Right cardiac atrium (tissue), 5 donors: ENCODE measurements at regions of chr11 and their contacts with region 1.

Region 1: GRCh38 chr11:69642913-69643632 is 2.1 kb downstream of the CCND1 start:
- DNase-seq: peak; percentile 83 to 93 (median 91)
- ATAC-seq: peak; percentile 69 to 72
- H3K4me3 ChIP-seq: peak overlapping the region; percentile 92
- H3K27ac ChIP-seq: peak overlapping the region; percentile 54
- H3K4me1 ChIP-seq: peaks cover 3% of the 10 kb centered on the region
- H3K27me3 ChIP-seq: no peaks in the 10 kb centered on the region

Region 2: DNA sequence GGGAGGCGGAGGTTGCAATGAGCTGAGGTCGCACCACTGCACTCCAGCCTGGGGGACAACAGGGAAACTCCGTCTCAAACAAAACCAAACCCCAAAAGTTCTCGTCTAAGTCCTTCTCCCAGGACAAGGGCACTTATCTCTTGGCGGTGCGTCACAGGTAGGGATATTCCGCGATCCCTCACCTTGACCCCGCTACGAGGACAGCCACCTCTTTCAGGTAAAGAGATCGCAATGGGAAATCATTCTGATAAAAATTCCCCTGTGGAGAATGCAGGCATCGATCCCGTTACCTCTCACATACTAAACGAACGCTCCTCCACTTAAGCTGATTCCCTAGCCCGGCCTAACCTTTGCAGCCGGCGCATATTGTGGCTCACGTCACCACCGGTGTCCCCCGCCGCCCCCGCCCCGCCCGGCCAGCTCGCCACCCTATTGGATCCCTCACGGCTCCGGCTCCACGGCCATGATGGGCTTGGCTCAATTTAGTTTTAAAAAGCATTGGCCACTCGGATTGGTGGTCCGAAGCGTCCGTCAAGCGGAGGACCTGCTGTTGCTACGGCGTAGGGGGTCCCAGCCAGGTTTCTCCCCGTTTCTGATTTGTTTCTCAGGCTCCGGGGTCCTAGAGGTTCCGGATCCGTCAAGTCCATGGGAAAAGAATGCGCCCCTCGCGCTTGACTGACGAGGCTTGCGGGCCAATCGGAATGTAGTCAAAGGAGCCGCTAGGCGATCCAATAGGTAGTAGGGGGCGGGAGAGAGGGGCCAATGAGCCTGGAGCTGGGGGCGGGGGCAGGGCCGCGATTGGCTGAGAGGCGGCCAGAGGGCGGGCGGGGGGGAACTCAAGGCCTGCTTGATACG is 1183.0 kb before region 1 on chr11:
- intact Hi-C with region 1: loop called in 1 of 4 experiments (anchors 10 kb)
- DNase-seq: peak; percentile 98 to 99 (median 98)
- ATAC-seq: peak; percentile 95 to 96
- H3K4me3 ChIP-seq: peak overlapping the region; percentile 97
- H3K27ac ChIP-seq: peak overlapping the region; percentile 98
- H3K4me1 ChIP-seq: peaks cover 12% of the 10 kb centered on the region
- H3K27me3 ChIP-seq: no peaks in the 10 kb centered on the region

Region 3: GRCh38 chr11:69101115-69101791 is 541.8 kb before region 1 on chr11:
- intact Hi-C with region 1: loop called (anchors 2 to 5 kb)
- DNase-seq: peak; percentile 83 to 89 (median 88)
- ATAC-seq: peak; percentile 83 to 85
- H3K4me3 ChIP-seq: no peak overlapping the region
- H3K27ac ChIP-seq: no peak overlapping the region
- H3K4me1 ChIP-seq: no peaks in the 10 kb centered on the region
- H3K27me3 ChIP-seq: no peaks in the 10 kb centered on the region

Region 4: DNA sequence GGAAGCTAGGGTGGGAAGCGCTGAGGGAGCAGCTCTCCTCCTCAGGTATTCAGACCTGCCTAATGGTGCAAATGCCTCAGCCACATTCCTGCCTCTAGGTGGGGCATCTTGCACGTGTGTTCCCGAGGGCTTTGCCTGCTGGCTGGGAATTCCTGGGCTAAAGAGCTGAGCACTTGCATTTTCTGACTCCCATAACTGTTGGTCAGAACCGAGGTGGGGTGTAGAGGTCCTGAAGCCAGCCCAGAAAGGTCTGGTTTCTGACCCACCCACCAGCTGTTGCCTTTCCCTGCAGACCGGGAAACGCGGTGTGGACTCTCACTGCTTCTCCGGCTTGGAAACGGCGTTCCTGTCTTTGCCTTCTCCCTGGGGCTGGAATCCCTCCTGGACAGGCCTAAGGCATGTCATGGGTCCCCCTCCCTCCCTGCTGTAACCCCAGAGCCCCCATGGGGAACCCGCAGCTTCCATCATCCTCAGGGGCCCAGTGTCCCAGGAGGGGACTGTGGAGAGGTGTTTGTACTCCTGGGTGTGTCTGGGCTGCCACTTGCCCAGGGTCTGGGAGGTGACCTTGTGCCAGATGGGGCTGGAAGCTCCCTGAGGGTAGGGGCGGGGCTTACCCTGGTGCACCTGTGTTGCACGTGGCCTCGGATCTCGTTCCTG is 511.3 kb before region 1 on chr11:
- intact Hi-C with region 1: loop called in 1 of 4 experiments (anchors 5 kb)
- DNase-seq: peak; percentile 68 to 86 (median 78)
- ATAC-seq: peak; percentile 73 to 82
- H3K4me3 ChIP-seq: no peak overlapping the region
- H3K27ac ChIP-seq: no peak overlapping the region
- H3K4me1 ChIP-seq: peaks cover under 1% of the 10 kb centered on the region
- H3K27me3 ChIP-seq: no peaks in the 10 kb centered on the region

Region 5: DNA sequence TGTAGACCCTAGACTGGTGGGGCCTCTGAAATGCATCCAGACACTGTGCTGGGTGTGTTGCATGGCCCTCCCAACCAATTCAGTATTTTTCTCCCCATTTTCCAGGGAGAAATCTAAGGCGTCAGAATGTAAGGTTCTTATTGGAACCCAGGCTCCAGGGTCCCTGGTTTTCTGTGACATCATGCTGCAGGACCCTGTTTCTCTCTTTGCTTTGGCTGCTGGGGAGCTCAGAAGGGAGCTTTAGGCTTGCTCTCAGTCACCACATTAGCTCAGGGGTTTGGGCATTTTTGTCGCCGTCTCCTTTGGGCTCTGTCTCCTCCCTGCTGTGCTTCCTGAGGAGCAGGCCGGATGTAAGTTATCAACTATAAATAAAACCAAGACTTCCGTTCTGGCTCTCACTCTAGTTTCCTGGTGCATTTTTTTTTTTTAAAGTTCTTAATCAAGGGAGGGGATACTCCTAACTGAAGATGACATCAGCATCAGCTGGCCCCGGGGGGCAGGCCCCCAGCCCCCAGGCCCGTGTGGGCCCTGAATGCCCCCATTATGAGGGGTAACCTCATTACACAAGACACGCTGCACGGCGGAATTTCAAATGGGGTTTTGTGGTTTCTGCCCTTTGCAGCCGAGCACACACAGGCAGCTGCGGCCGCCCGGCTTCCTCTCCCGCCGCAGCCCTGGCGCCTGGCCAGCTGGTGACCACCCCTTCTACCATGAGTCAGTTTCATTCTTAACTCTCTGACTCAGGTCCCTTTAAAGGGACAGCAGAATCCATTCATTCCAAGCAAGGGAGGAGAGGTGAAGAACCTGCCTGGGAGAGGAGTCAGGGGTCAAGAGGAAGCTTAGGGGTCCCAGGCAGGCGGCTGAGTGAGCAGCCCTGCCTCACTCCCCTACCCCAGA is 345.9 kb before region 1 on chr11:
- intact Hi-C with region 1: loop called in 3 of 4 experiments (anchors 5 to 10 kb)
- DNase-seq: peak; percentile 96 to 98 (median 97)
- ATAC-seq: peak; percentile 83 to 87
- H3K4me3 ChIP-seq: no peak overlapping the region
- H3K27ac ChIP-seq: peak overlapping the region; percentile 82
- H3K4me1 ChIP-seq: peaks cover 17% of the 10 kb centered on the region
- H3K27me3 ChIP-seq: no peaks in the 10 kb centered on the region

Region 6: DNA sequence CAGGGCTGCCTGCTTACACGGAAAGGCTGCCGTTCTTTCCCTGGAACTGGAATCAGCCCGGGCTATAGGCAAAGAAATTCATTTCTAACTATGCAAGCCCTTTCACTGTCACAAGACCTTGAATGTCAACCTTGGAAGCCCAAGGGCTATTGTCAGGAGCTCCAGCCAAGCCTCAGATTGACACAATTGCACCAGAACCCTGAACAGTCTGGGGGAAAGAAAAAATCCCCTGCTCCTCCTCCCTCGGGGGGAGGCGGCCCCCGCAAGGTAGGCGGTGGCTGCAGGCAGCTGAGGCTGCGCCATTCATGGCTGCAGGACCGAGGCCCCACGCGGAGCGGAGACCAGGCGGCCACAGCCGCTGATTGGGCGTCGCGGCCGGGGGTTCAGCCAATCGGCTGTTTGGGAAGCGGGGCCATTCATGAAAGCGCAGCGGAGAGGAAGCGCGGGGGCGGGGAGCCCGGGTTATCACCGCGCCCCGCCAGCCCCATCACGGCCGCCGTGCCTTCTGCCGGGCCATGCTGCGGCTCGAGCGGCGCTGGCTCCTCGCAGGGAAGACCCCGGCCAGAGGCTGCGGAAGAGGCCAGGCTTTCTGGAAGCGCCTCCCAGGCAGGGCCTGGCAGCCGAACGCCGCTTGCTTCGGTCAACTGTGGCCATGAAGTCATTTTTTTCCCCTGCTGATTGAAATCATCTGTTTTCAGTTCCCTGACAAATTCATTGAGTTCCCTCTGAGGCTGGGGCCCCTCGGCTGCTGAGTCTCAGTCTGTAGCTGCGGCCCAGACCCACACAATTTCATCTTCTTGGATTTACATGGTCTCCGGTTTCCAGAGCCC is 199.7 kb before region 1 on chr11:
- intact Hi-C with region 1: loop called in 2 of 4 experiments (anchors 10 kb)
- DNase-seq: peak; percentile 95 to 97 (median 97)
- ATAC-seq: peak; percentile 95
- H3K4me3 ChIP-seq: peak overlapping the region; percentile 42
- H3K27ac ChIP-seq: peak overlapping the region; percentile 84
- H3K4me1 ChIP-seq: peaks cover 4% of the 10 kb centered on the region
- H3K27me3 ChIP-seq: no peaks in the 10 kb centered on the region

Region 7: DNA sequence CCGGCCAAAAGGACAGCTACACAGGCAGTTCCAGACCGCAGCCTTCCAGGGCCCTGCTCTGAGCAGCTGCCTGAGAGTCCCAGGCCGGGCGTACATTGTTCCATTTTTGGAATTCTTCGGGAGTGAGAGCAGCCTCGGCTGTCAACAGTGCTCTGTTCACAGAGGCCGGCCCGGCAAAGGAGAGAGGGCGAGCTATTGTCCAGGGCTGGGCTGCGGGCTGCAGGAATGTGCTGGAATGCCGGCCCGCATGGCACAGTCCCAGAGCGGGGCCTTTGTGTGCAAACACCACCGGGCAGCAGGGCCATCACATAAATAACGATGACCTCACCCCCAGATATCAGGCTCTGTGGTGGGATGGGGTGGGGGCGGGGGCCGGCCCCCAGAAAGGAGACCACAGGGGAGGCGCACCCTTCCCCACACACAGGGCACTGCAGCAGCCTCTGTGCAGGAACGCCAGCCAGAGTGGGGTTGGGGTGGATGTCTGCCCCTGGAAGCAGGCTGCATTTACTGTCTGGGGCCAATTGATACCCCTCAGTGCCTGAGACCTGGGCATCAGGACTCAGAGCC is 145.8 kb before region 1 on chr11:
- intact Hi-C with region 1: loop called in 1 of 4 experiments (anchors 10 kb)
- DNase-seq: peak; percentile 89 to 95 (median 94)
- ATAC-seq: peak; percentile 96
- H3K4me3 ChIP-seq: no peak overlapping the region
- H3K27ac ChIP-seq: peak overlapping the region; percentile 60
- H3K4me1 ChIP-seq: peaks cover 7% of the 10 kb centered on the region
- H3K27me3 ChIP-seq: no peaks in the 10 kb centered on the region

Region 8: DNA sequence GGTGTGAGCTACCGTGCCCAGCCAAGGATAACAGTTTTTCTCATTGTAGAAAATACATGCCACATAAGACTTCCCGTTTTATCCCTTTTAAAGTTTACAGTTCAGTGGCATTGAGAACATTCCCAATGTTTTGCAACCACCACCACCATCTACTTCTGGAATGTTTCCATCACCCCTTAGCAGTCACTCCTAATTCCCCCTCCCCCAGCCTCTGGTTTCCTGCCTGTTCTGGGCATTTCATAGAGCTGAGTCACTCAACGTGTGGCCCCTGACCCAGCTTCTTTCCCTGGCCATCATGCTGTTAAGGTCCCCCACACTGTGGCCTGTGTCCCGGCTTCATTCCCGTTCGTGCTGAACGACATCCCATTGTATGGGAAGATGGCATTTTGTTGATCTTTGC is 101.4 kb after region 1 on chr11:
- intact Hi-C with region 1: no loop called
- DNase-seq: no peak
- ATAC-seq: no peak
- H3K4me3 ChIP-seq: no peak overlapping the region
- H3K27ac ChIP-seq: no peak overlapping the region
- H3K4me1 ChIP-seq: no peaks in the 10 kb centered on the region
- H3K27me3 ChIP-seq: no peaks in the 10 kb centered on the region